IMR-90 (cell line): ENCODE measurements at regions of chr5 and their contacts with region 1.

Region 1: DNA sequence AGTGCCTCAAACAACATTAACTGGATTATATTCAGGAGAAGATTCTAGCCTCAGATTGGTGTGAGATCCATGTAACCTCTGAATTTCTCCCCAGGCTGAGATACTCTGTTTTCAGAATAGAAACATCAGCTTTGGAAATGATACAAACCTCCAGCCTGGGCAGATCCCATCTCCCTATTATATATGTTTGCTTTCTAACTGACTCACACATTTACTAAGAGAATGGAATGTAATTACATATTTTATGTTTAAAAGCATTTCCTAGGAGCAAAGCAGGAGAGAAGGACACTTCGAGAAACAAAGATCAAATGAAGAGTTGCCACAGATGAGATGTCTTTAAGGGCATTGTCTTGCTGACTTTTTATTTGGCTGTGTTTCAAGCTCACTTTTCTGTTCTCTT is 96.4 kb downstream of the CDH18 start:
- DNase-seq: peak; percentile 72
- ATAC-seq: peak; percentile 96
- H3K4me3 ChIP-seq: no peak overlapping the region
- H3K27ac ChIP-seq: peak overlapping the region; percentile 29; the same call in 1 of the 2 replicates
- H3K4me1 ChIP-seq: no peaks in the 10 kb centered on the region
- H3K27me3 ChIP-seq: no peaks in the 10 kb centered on the region
- CTCF ChIP-seq: no peak
- POLR2A ChIP-seq: no peak
- RAD21 ChIP-seq: no peak

Region 2: DNA sequence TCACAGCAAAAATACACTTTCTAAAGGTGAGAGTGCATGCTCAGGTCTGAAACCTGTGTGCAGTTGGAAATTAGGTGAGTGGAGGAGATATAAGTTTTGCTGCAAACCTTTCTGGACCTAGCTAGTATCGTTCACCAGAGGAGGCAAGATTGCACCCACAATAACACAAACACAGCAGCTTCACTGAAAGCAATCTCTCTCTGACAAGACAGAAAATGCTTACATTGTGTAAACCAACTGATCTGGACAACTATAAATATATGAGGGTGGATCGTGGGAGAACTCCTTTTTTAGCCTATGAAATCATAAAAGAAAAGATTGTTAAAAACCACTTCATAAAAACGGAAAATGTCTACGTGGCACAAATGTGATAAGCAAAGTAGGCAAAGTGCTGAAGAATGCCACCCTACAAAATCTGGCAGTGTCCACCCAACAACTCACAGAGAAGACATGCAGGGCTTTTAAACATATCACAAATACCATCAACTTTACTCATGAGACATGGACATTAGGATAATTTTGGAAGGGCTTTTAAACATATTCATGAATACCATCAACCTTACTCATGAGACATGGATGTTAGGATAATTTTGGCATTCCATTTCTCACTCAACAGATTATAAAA is 37.9 kb before region 1 on chr5:
- CTCF ChIA-PET with region 1: no interaction called
- POLR2A ChIA-PET with region 1: no interaction called
- dilution Hi-C with region 1: no loop called
- in situ Hi-C with region 1: no loop called
- intact Hi-C with region 1: loop called (anchors 5 kb)
- DNase-seq: peak; percentile 74
- ATAC-seq: peak; percentile 81
- H3K4me3 ChIP-seq: no peak overlapping the region
- H3K27ac ChIP-seq: no peak overlapping the region
- H3K4me1 ChIP-seq: peaks cover 6% of the 10 kb centered on the region
- H3K27me3 ChIP-seq: no peaks in the 10 kb centered on the region
- CTCF ChIP-seq: no peak
- POLR2A ChIP-seq: no peak
- RAD21 ChIP-seq: no peak

Region 3: GRCh38 chr5:19928562-19929421 is 37.2 kb after region 1 on chr5:
- CTCF ChIA-PET with region 1: interaction called, 3 read pairs
- POLR2A ChIA-PET with region 1: no interaction called
- dilution Hi-C with region 1: no loop called
- in situ Hi-C with region 1: no loop called
- intact Hi-C with region 1: loop called (anchors 5 kb)
- DNase-seq: peak; percentile 92
- ATAC-seq: peak; percentile 80
- H3K4me3 ChIP-seq: no peak overlapping the region
- H3K27ac ChIP-seq: peak overlapping the region; percentile 40; the same call in 1 of the 2 replicates
- H3K4me1 ChIP-seq: peaks cover 4% of the 10 kb centered on the region
- H3K27me3 ChIP-seq: no peaks in the 10 kb centered on the region
- CTCF ChIP-seq: no peak
- POLR2A ChIP-seq: no peak
- RAD21 ChIP-seq: no peak